Gastrocnemius medialis (tissue), 4 donors: ENCODE measurements at regions of chr12 and their contacts with region 1.

Region 1: DNA sequence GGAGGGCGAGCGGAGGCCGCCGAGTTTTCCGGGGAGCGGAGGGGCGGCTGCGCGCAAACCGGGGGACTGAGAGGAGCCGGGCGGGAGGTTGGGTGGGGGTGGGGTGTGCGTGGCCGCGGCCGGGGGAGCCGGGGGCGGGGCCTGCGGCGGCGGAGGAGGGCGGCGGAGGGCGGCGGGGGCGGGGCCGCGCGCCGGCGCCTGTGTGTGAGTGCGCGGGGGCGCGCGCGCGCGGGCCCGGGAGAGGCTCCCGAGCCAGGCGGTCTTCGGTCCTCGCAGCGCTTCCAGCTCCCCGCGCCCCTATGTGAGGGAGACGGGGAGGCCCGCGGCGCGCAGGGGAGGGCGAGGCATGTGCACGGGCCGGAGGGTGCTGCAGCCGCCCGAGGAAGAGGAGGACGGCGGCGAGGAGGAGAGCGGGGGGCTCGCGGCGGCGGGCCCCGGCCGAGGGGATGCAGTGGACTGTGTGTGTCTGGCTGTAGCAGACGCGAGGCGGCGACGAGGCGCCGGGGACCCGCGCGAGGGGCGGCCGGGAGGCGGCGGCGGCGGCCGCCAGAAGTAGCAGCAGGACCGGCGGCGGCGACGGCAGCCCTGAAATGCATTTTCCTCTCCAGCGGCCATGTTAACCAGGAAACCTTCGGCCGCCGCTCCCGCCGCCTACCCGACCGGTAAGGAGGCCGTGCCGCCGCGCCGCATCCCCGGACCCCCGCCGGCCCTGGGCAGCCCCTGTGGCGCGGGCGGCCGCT is at the start of gene DYRK2:
- DNase-seq: peak; percentile 56 to 78
- ATAC-seq: peak; percentile 51
- H3K4me3 ChIP-seq: peak within 1 kb of the TSS; percentile 94 to 98 (median 98)
- H3K27ac ChIP-seq: peak within 1 kb of the TSS; percentile 98 to 100 (median 99)
- H3K4me1 ChIP-seq: peaks cover 36 to 42% of the 10 kb centered on the region in 2 donors
- H3K27me3 ChIP-seq: no peaks in the 10 kb centered on the region
- CTCF ChIP-seq: peak in 3 of 5 experiments; percentile 14 to 18 (median 14)
- POLR2A ChIP-seq: peak; percentile 84 to 89
- total RNA-seq, gene DYRK2: 14.1 to 25.7 (median 15.9) TPM

Region 2: DNA sequence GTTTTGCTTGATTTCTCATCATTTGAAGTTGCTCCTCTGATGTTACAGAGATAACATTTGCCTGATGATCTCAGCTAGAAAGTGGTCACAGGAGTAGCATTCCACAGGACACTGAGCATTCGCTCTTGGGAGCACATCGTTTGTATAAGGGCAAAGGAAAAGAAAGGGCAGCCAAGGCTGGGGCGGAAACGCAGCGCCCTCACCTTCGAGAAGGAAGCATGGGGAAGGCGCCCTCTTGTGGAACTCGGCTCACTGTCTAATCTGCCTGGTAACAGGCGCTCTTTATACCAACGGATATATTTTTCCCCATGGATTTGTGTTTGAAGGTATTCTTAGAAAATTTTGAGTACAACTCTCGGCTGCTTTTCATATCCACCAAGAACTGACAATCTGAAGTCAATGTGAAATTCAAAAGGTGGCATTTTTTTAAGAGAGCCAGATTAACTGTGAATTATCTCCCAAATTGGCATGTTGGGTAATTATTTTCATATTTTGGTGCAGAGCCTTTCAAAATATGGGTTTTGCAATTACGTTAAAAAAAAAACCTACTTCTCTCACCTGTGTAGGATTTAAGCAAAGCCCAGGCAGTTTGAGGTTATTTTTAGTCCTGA is 206.8 kb before region 1 on chr12:
- in situ Hi-C with region 1: no loop called
- intact Hi-C with region 1: loop called (anchors 5 kb)
- DNase-seq: peak; percentile 78 to 88
- ATAC-seq: peak; percentile 95 to 99
- H3K4me3 ChIP-seq: peak overlapping the region; percentile 45 to 55 (median 50)
- H3K27ac ChIP-seq: peak overlapping the region; percentile 70 to 86 (median 76)
- H3K4me1 ChIP-seq: peaks cover 13 to 18% of the 10 kb centered on the region in 2 donors
- H3K27me3 ChIP-seq: no peaks in the 10 kb centered on the region
- CTCF ChIP-seq: peak; percentile 69 to 86 (median 75)
- POLR2A ChIP-seq: no peak

Region 3: DNA sequence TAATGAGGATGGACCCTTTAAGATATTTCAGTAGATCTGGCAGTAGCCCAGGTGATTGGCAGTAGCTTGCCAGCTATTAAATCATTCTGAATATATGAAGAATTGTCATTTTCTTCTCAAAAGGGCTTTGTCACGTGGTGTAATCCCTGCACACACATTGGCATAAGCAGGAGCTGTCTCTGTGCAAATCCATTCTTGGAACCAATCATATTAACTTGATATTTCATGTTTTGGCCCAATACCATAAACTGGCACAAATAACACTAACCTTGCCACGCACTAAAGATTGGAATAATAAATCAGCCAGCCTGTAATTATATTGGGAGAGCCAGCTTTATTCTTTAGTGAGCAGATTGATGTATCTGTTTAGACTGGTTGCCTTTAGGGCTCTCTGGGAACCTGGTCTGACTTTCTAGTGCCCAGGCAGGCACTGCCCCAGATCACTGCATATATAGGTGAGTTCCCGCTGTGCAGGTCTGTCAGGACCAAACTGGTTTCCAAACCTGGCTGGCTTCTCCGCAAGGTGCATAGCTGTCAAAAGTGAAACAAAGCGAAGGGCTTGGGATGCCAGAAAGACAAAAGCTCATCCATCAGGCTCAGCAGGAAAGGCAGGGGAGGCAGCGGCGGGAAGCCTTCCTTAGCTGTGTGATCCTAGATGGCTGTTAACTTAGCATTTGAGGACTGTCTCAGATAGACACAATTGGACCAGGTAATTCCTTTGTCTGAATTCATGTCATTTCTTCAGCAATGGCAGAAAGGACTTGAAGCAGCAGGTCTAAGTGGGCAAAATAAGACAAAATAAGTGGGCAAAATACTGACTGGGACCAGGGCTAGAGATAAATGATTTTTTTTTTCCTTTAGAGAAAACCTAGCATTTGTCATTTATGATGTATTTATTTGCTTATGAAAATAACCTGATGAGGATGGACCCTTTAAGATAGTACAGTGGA is 128.9 kb before region 1 on chr12:
- in situ Hi-C with region 1: loop called in 1 of 4 experiments (anchors 10 kb)
- intact Hi-C with region 1: no loop called
- DNase-seq: no peak
- ATAC-seq: no peak
- H3K4me3 ChIP-seq: no peak overlapping the region
- H3K27ac ChIP-seq: no peak overlapping the region
- H3K4me1 ChIP-seq: peaks cover 17 to 20% of the 10 kb centered on the region in 2 donors
- H3K27me3 ChIP-seq: no peaks in the 10 kb centered on the region
- CTCF ChIP-seq: no peak
- POLR2A ChIP-seq: no peak

Region 4: GRCh38 chr12:67681105-67681778 is 32.6 kb after region 1 on chr12:
- in situ Hi-C with region 1: no loop called
- intact Hi-C with region 1: no loop called
- DNase-seq: peak; percentile 43 to 44
- ATAC-seq: peak; percentile 99
- H3K4me3 ChIP-seq: no peak overlapping the region
- H3K27ac ChIP-seq: peak overlapping the region; percentile 79 to 88 (median 86)
- H3K4me1 ChIP-seq: peaks cover 15 to 36% of the 10 kb centered on the region in 2 donors
- H3K27me3 ChIP-seq: no peaks in the 10 kb centered on the region
- CTCF ChIP-seq: no peak
- POLR2A ChIP-seq: no peak

Region 5: GRCh38 chr12:67710582-67710981 is 61.9 kb after region 1 on chr12:
- in situ Hi-C with region 1: no loop called
- intact Hi-C with region 1: no loop called
- DNase-seq: no peak
- ATAC-seq: no peak
- H3K4me3 ChIP-seq: no peak overlapping the region
- H3K27ac ChIP-seq: no peak overlapping the region
- H3K4me1 ChIP-seq: peaks cover 9% of the 10 kb centered on the region in 2 donors
- H3K27me3 ChIP-seq: no peaks in the 10 kb centered on the region
- CTCF ChIP-seq: no peak
- POLR2A ChIP-seq: no peak

Region 6: GRCh38 chr12:67827820-67828383 is 179.2 kb after region 1 on chr12:
- in situ Hi-C with region 1: loop called in 1 of 4 experiments (anchors 10 kb)
- intact Hi-C with region 1: loop called (anchors 5 kb)
- DNase-seq: peak; percentile 41 to 59
- ATAC-seq: peak; percentile 97 to 98
- H3K4me3 ChIP-seq: peak overlapping the region; percentile 41 to 51 (median 44)
- H3K27ac ChIP-seq: peak overlapping the region; percentile 82 to 88 (median 84)
- H3K4me1 ChIP-seq: peaks cover 15 to 18% of the 10 kb centered on the region in 2 donors
- H3K27me3 ChIP-seq: no peaks in the 10 kb centered on the region
- CTCF ChIP-seq: no peak
- POLR2A ChIP-seq: peak in 1 of 2 donors; percentile 32

Region 7: DNA sequence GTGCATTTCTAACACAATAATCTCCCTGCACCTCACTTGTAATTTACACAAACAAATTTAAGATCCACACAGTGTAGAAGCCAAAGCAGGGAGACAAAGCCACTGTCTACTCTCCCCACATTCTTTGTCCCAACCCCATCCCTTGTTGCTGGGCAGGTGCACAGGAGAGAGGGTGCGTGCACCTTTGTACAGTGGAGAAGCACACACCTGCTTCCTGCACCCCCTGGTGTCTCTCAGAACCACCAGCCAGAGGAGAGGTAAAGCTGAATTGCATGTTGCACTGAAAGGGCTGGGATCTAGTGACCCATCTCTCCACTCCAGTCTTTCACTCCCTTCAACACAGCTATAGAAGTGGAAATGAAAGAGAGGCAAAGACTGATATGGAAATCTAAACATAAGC is 289.1 kb after region 1 on chr12:
- in situ Hi-C with region 1: loop called in 2 of 4 experiments (anchors 10 to 25 kb)
- intact Hi-C with region 1: loop called (anchors 2 kb)
- DNase-seq: no peak
- ATAC-seq: no peak
- H3K4me3 ChIP-seq: no peak overlapping the region
- H3K27ac ChIP-seq: no peak overlapping the region
- H3K4me1 ChIP-seq: peaks cover 18 to 30% of the 10 kb centered on the region in 2 donors
- H3K27me3 ChIP-seq: no peaks in the 10 kb centered on the region
- CTCF ChIP-seq: no peak
- POLR2A ChIP-seq: no peak